Activated CD4-positive, alpha-beta T cell treated with anti-CD3 and anti-CD28 coated beads, Interleukin-2, amount 10 ng/mL, durations not matched to agents 24 days and 14 days (primary cell): ENCODE measurements at regions of chr9 and their contacts with region 1.

Region 1: DNA sequence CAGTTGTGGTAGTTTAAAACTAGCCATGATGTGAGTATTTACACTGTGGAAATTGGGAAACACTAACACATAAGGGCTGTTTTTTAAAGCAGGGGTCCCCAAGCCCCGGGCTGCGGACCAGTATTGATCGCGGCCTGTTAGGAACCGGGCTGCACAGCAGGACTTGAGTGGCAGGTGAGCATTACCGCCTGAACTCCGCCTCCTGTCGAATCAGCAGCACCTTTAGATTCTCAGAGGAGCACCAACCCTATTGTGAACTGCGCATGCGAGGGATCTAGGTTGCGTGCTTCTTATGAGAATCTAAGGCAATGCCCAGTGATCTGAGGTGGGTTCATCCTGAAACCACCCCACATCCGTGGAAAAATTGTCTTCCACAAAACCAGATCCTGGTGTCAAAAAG is 127.8 kb downstream of the PCSK5 start:
- DNase-seq: peak; percentile 62
- H3K4me3 Mint-ChIP-seq: peak overlapping the region; percentile 5
- H3K27ac Mint-ChIP-seq: no peak overlapping the region
- H3K4me1 Mint-ChIP-seq: peaks cover 32% of the 10 kb centered on the region
- H3K27me3 Mint-ChIP-seq: peaks cover 3% of the 10 kb centered on the region

Region 2: GRCh38 chr9:76004526-76004925 is 13.7 kb before region 1 on chr9:
- intact Hi-C with region 1: loop called (anchors 2 kb)
- DNase-seq: no peak
- H3K4me3 Mint-ChIP-seq: no peak overlapping the region
- H3K27ac Mint-ChIP-seq: no peak overlapping the region
- H3K4me1 Mint-ChIP-seq: peaks cover 15% of the 10 kb centered on the region
- H3K27me3 Mint-ChIP-seq: peaks cover 1% of the 10 kb centered on the region

Region 3: DNA sequence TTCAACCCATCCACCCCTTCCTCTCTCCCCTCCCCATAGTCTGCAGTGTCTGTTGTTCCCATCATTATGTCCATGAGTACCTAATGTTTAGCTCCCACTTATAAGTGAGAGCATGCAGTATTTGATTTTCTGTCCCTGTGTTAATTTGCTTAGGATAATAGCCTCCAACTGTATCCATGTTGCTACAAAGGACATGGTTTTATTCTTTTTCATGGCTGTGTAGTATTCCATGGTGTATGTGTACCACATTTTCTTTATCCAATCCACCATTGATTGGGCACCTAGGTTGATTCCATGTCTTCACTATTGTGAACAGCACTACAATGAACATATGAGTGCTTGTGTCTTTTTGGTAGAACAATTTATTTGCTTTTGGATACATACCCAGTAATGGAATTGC is 59.3 kb after region 1 on chr9:
- intact Hi-C with region 1: loop called (anchors 10 kb)
- DNase-seq: no peak
- H3K4me3 Mint-ChIP-seq: no peak overlapping the region
- H3K27ac Mint-ChIP-seq: no peak overlapping the region
- H3K4me1 Mint-ChIP-seq: no peaks in the 10 kb centered on the region
- H3K27me3 Mint-ChIP-seq: no peaks in the 10 kb centered on the region